ENCODE measurements at regions of chr12 and their contacts with region 1.

Region 1: GRCh38 chr12:61676520-61676919 is 583.7 kb upstream of the USP15 start:
- DNase-seq: no peak
- ATAC-seq: no peak
- H3K4me3 ChIP-seq: no peak overlapping the region
- H3K27ac ChIP-seq: no peak overlapping the region
- H3K4me1 ChIP-seq: no peaks in the 10 kb centered on the region
- H3K27me3 ChIP-seq: no peaks in the 10 kb centered on the region
- CTCF ChIP-seq: no peak

Region 2: DNA sequence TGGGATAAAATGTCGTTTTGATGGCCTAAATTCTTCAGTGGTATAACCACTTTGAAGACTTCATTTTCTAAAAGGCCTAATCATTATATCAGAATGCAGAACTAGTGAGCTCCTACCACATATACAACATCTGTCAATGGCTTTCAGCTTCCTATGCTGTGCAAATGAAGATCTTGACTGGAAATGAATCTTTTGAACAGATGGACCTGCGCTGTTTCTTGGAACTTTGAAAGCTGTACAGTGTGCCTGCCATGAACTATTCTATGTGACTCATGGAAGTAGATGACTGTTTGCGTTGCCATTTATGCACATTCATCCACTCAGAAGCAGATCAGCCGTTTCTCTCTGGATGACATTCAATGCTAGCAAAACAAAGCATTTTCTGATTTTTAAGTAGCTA is 41.5 kb after region 1 on chr12:
- intact Hi-C with region 1: loop called in 1 of 2 experiments (anchors 2 kb)
- DNase-seq: no peak
- ATAC-seq: no peak
- H3K4me3 ChIP-seq: no peak overlapping the region
- H3K27ac ChIP-seq: no peak overlapping the region
- H3K4me1 ChIP-seq: no peaks in the 10 kb centered on the region
- H3K27me3 ChIP-seq: no peaks in the 10 kb centered on the region
- CTCF ChIP-seq: no peak